ENCODE measurements at regions of chr7 and their contacts with region 1.

Region 1: DNA sequence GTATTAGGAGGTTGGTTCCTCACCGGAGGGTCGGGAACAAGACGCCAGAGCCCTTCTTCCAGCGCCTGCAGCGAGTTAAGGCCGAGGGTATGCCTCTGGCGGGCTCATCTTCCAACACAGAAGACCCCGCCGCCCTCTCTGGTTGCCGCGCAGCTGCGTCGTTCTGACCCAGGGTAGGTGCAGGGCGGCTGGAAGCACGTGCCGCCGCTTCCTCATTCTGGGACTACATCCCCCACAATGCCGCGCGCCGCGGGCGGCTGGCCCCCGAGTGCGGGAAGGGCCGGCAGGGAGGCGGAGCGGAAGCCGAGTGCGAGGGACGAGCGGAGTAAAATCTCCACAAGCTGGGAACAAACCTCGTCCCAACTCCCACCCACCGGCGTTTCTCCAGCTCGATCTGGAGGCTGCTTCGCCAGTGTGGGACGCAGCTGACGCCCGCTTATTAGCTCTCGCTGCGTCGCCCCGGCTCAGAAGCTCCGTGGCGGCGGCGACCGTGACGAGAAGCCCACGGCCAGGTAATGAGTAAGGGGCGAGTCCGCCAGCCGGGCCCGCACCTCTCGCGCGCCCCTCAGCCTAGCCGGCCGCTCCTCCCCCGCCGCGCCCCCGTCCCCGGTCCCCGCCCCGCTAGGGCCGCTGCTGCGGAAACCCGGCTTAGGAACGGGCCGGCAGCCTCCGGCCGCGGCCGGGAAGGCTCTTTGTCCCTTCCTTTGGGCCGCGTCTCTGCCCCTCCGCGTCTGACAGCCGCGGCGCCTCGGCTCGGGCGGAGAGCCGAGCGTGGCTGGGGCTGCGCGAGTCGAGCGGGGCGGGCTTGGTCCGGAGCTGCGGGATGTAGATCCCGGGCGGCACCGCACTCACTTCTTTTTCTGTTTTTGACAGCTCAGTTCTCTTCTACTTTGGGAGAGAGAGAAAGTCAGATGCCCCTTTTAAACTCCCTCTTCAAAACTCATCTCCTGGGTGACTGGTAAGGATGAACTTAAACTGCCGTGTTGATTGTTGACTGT is at the start of gene CCDC126:
- DNase-seq: peak; percentile 93
- H3K4me3 ChIP-seq: peak within 1 kb of the TSS; percentile 67 to 94 (median 70)
- H3K27ac ChIP-seq: peak within 1 kb of the TSS; percentile 73
- H3K4me1 ChIP-seq: peaks cover 12% of the 10 kb centered on the region
- H3K27me3 ChIP-seq: peaks cover 0 to 5% of the 10 kb centered on the region in 2 experiments
- CTCF ChIP-seq: no peak
- POLR2A ChIP-seq: peak; percentile 16
- total RNA-seq, gene CCDC126: 7.1 and 8.6 TPM in 2 replicates

Region 2: GRCh38 chr7:23514755-23515154 is 82.6 kb before region 1 on chr7:
- CTCF ChIA-PET with region 1: no interaction called
- POLR2A ChIA-PET with region 1: no interaction called
- dilution Hi-C with region 1: no loop called
- intact Hi-C with region 1: no loop called
- DNase-seq: no peak
- H3K4me3 ChIP-seq: no peak overlapping the region
- H3K27ac ChIP-seq: no peak overlapping the region
- H3K4me1 ChIP-seq: no peaks in the 10 kb centered on the region
- H3K27me3 ChIP-seq: no peaks in the 10 kb centered on the region
- CTCF ChIP-seq: no peak
- POLR2A ChIP-seq: no peak

Region 3: GRCh38 chr7:23679898-23680413 is 82.6 kb after region 1 on chr7 and contains the start of gene FAM221A:
- CTCF ChIA-PET with region 1: interaction called, 7 read pairs
- POLR2A ChIA-PET with region 1: no interaction called
- dilution Hi-C with region 1: no loop called
- intact Hi-C with region 1: loop called (anchors 1 kb)
- DNase-seq: peak; percentile 84
- H3K4me3 ChIP-seq: peak within 1 kb of the TSS; percentile 40 to 80 (median 72)
- H3K27ac ChIP-seq: no peak within 1 kb of the TSS
- H3K4me1 ChIP-seq: peaks cover 2% of the 10 kb centered on the region
- H3K27me3 ChIP-seq: peaks cover 0 to 5% of the 10 kb centered on the region in 2 experiments
- CTCF ChIP-seq: peak; percentile 70 to 89
- POLR2A ChIP-seq: no peak
- total RNA-seq, gene FAM221A: 6.1 and 8.1 TPM in 2 replicates

Region 4: DNA sequence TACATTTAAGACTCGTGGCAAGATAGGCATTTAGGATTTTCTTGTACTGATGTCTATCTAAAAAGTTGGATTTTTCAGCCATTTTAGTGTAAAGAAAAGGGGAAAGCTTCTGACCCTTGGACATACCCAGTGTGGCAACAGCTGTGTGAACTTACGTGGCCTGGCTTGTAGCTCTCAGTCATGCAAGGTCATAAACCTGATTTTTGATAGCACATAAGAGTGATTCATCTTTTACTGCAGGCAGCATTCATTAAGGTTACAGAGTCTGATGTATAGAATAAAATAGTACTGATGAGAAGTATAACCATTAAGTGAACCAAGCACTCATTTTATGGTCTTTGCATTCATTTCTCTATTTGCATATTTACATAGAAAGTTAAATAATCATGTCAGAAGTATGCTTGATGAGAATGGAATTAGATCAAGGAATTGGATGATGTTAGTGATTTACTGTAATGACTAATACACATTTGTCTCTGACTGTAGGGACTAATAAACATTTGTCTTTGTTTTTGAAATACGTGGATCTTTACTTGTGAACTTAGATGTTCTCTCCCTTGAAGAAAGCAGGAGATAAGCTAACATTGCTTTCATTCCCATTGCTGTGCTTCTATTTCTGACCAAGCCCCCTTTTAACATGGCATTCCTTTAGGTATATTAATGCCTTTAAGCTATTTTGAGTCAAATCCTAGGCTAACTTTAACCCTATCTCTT is 1071.7 kb after region 1 on chr7:
- CTCF ChIA-PET with region 1: no interaction called
- POLR2A ChIA-PET with region 1: no interaction called
- dilution Hi-C with region 1: no loop called
- intact Hi-C with region 1: no loop called
- DNase-seq: peak; percentile 70
- H3K4me3 ChIP-seq: no peak overlapping the region
- H3K27ac ChIP-seq: peak overlapping the region; percentile 48
- H3K4me1 ChIP-seq: peaks cover 28% of the 10 kb centered on the region
- H3K27me3 ChIP-seq: no peaks in the 10 kb centered on the region
- CTCF ChIP-seq: no peak
- POLR2A ChIP-seq: no peak

Measured in endothelial cell of umbilical vein (primary cell).